A549 (cell line): ENCODE measurements at regions of chr7 and their contacts with region 1.

Region 1: DNA sequence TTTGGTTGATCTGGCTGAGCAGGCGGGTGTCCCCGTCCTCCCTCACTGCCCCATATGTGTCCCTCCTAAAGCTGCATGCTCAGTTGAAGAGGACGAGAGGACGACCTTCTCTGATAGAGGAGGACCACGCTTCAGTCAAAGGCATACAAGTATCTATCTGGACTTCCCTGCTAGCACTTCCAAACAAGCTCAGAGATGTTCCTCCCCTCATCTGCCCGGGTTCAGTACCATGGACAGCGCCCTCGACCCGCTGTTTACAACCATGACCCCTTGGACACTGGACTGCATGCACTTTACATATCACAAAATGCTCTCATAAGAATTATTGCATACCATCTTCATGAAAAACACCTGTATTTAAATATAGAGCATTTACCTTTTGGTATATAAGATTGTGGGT is 26.9 kb upstream of the TRIM56 start:
- DNase-seq: peak; percentile 43 to 51
- ATAC-seq: peak in 1 of 2 experiments; percentile 50; a peak in 2 of 6 replicates
- H3K4me3 ChIP-seq: no peak overlapping the region
- H3K27ac ChIP-seq: no peak overlapping the region
- H3K4me1 ChIP-seq: no peaks in the 10 kb centered on the region
- CTCF ChIP-seq: no peak
- EP300 ChIP-seq: no peak
- POLR2A ChIP-seq: no peak
- RAD21 ChIP-seq: no peak

Region 2: DNA sequence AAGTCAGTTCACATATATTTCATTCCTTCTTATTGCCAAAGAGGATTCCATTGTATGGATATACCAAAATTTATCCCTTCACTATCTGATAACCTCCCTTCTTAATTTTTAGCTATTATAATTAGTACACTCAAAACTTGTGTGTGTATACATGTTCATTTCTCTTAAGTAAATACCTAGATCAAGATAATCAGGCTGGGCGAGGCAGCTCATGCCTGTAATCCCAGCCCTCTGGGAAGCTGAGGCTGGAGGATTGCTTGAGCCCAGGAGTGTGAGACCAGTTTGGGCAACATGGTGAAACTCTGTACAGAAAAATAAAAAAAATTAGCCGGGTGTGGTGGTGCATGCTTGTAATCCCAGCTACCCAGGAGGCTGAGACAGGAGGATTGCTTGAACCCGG is 146.9 kb before region 1 on chr7:
- CTCF ChIA-PET with region 1: interaction called, 45 read pairs
- POLR2A ChIA-PET with region 1: no interaction called
- DNase-seq: no peak
- ATAC-seq: no peak
- H3K4me3 ChIP-seq: no peak overlapping the region
- H3K27ac ChIP-seq: no peak overlapping the region
- H3K4me1 ChIP-seq: no peaks in the 10 kb centered on the region
- CTCF ChIP-seq: no peak
- EP300 ChIP-seq: no peak
- POLR2A ChIP-seq: no peak
- RAD21 ChIP-seq: no peak

Region 3: GRCh38 chr7:100949227-100949932 is 109.0 kb before region 1 on chr7 and contains the start of gene MUC3A:
- CTCF ChIA-PET with region 1: interaction called, 17 read pairs
- POLR2A ChIA-PET with region 1: no interaction called
- DNase-seq: no peak
- ATAC-seq: peak in 1 of 2 experiments; percentile 19; a peak in 1 of 6 replicates
- H3K4me3 ChIP-seq: no peak within 1 kb of the TSS
- H3K27ac ChIP-seq: no peak within 1 kb of the TSS
- H3K4me1 ChIP-seq: no peaks in the 10 kb centered on the region
- CTCF ChIP-seq: no peak
- EP300 ChIP-seq: no peak
- POLR2A ChIP-seq: no peak
- RAD21 ChIP-seq: no peak
- polyA plus RNA-seq, gene MUC3A: 4.0 and 4.4 TPM in 2 replicates

Region 4: DNA sequence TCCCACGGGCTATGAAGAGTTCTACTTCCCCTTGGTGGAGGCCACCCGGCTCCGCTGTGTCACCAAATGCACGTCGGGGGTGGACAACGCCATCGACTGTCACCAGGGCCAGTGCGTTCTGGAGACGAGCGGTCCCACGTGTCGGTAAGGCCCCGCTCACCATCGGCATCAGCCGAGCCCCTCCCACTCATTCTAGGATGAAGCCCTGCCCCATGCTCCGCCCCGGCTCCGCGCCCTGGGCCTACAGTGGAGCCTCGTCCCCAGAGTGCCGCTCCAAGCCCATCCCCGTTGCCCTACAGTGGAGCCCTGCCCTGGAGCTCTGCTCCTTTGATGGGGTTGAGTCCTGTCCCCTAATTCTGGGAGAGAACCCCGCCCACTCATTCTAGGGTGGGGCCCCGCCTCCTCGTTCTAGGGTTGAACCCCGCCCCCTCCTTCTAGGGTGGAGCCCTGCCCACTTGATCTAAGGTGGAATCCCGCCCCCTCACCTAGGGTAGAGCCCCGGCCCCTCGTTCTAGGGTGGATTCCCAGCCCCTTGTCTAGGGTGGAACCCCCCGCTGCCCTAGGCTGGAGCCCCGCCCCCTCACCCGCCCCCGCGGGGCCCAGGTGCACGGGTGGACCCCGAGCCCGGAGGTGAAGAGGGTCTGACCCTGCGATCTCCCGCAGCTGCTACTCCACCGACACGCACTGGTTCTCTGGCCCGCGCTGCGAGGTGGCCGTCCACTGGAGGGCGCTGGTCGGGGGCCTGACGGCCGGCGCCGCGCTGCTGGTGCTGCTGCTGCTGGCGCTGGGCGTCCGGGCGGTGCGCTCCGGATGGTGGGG is 92.4 kb before region 1 on chr7:
- CTCF ChIA-PET with region 1: interaction called, 25 read pairs
- POLR2A ChIA-PET with region 1: no interaction called
- DNase-seq: peak; percentile 88 to 98
- ATAC-seq: peak; percentile 85 to 93
- H3K4me3 ChIP-seq: peak overlapping the region; percentile 48
- H3K27ac ChIP-seq: peak overlapping the region; percentile 48 to 74; a peak in 5 of 6 replicates
- H3K4me1 ChIP-seq: peaks cover 24% of the 10 kb centered on the region; the same call in 2 of the 3 replicates
- CTCF ChIP-seq: peak; percentile 99
- EP300 ChIP-seq: no peak
- POLR2A ChIP-seq: no peak
- RAD21 ChIP-seq: peak; percentile 74 to 87

Region 5: DNA sequence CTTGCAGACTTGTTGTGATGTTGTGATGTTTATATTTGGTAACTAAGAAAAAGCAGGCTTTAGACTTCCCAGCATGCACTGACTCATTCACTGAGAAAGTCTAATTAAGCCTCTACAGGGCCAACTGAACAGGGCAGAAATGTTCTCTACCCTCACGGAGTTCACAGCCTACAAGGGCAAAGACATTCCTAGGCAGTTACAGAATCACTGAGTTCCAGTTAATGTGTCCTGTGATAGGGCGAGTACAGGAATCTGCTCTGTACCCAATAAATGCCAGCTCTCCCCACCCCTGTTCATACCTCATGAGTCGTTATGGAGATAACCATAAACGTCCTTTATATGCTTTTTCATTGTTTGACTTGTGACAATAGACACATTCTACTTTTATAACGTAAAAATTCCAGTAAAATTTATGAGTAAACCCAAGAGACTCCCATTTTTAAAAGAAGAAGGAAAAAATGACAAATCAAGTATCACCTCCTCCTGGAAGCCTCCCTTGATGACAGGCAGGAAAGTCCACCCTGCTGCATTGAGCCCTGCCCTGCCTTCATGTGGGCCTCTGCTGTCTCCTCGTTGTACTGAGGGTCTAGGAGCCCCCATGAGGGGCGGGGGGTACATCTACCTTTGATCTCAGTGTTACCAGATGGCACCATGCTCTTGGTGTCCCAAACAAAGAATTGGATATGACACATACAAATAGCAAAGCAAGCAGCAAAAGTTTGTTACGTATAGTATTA is 74.7 kb before region 1 on chr7:
- CTCF ChIA-PET with region 1: interaction called, 12 read pairs
- POLR2A ChIA-PET with region 1: no interaction called
- DNase-seq: peak in 1 of 2 experiments; percentile 91
- ATAC-seq: peak; percentile 94 to 95
- H3K4me3 ChIP-seq: no peak overlapping the region
- H3K27ac ChIP-seq: peak overlapping the region; percentile 59 to 61; a peak in 5 of 6 replicates
- H3K4me1 ChIP-seq: peaks cover 29% of the 10 kb centered on the region
- CTCF ChIP-seq: no peak
- EP300 ChIP-seq: 0 out of 5 replicates have a peak, but pooled peaks of 1 of the 2 experiments have one; percentile 33
- POLR2A ChIP-seq: no peak
- RAD21 ChIP-seq: no peak